Natural killer cell (primary cell): ENCODE measurements at regions of chr9 and their contacts with region 1.

Region 1: DNA sequence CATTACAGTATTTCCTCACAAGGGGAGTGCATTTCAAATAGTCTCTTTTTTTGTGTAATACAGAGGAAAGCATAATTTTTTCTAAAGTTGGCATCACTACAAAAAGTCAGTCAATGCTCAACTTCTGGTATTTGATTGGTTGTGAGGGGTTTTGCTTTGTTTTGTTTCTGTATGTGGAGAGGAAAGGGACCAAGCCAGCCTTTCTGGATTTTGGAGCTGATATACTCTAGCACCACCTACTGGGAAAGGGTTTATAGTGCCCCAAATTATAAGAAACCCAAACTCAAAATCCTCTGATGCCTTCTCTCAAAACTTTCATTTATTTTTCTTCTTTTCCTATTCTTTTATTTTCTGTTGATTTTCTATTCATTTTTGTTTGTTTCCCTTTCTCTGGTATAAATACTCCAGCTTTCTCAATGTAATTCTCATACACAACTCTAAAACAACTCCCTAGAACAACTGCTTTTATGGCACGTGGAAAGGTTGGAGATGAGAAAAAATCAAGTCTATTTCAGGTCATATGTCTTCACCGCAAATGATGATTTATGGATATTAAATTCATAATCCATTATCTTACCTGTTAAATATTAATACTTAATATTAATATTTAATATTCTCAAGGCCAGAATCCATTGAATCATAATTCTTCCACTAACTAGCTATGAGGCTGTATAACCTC is 69.5 kb upstream of the ANXA1 start:
- DNase-seq: peak in 1 of 2 donors; percentile 52
- ATAC-seq: peak; percentile 40 to 74 (median 64)
- H3K4me3 ChIP-seq: no peak overlapping the region
- H3K4me3 Mint-ChIP-seq: no peak overlapping the region
- H3K27ac ChIP-seq: no peak overlapping the region
- H3K27ac Mint-ChIP-seq: no peak overlapping the region
- H3K4me1 ChIP-seq: no peaks in the 10 kb centered on the region
- H3K4me1 Mint-ChIP-seq: no peaks in the 10 kb centered on the region
- H3K27me3 ChIP-seq: no peaks in the 10 kb centered on the region
- H3K27me3 Mint-ChIP-seq: peaks cover 6 to 48% of the 10 kb centered on the region in 2 donors
- CTCF ChIP-seq: peak; percentile 79

Region 2: DNA sequence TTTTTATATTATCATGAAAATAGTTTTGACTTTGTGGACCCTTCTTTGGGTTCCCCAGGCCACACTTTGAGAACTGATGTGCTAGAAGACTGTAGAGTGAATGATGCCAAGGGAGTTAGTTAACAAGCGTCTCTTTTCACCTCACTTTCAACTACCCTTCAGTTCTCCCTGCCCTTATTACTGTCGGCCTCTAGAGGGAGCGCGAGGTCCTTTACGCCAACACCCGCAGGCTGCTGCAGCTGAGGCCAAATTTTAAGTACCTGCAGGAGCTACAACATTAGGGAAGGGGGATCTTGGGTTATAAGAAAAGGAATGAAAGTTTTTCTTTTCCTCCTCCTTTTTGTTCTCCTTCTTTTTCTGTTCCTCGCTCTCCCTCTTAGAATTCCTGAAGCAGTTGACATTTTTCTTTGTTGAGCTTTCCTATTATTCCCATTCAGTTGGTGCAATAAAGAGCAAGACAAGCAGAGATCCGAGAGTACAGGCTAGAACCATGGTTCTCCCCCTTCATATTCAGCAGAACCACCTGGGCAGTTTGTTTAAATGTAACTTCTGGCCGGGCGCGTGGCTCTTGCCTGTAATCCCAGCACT is 801.1 kb before region 1 on chr9:
- intact Hi-C with region 1: loop called (anchors 2 kb)
- DNase-seq: peak; percentile 66 to 87
- ATAC-seq: peak; percentile 87 to 99 (median 99)
- H3K4me3 ChIP-seq: no peak overlapping the region
- H3K4me3 Mint-ChIP-seq: no peak overlapping the region
- H3K27ac ChIP-seq: no peak overlapping the region
- H3K27ac Mint-ChIP-seq: no peak overlapping the region
- H3K4me1 ChIP-seq: no peaks in the 10 kb centered on the region
- H3K4me1 Mint-ChIP-seq: no peaks in the 10 kb centered on the region
- H3K27me3 ChIP-seq: no peaks in the 10 kb centered on the region
- H3K27me3 Mint-ChIP-seq: peaks cover 0 to 2% of the 10 kb centered on the region in 2 donors
- CTCF ChIP-seq: peak; percentile 98

Region 3: DNA sequence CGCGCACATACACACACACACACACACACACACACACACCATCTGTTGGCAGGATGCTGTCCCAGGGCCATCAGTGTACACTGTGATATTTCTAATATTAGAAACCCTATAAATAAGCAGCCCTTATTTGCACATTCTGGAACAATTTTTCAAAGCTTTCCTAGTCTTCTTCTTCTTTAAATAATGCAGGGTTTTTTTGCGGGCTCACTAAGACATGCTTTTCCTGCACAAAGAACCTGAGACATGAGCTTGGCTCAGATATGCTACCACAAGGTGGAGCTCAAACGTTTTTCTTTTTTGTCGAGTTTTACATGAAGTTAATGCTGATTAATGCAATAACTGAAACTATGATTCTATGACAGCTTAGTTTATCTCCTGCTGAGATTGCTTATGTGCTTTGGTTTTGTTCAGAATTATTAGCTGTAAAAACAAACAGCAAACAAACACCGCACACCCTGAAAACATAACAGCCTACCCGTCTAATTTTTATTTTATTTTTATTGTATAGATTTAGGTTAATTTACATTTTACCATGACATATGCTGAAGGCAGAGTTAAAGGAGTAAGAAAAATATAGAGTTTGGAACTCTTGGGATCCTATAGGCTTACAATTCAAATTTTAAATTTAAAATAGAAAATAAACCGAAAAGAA is 225.0 kb before region 1 on chr9:
- intact Hi-C with region 1: loop called (anchors 1 kb)
- DNase-seq: peak in 1 of 2 donors; percentile 29
- ATAC-seq: no peak
- H3K4me3 ChIP-seq: no peak overlapping the region
- H3K4me3 Mint-ChIP-seq: no peak overlapping the region
- H3K27ac ChIP-seq: no peak overlapping the region
- H3K27ac Mint-ChIP-seq: no peak overlapping the region
- H3K4me1 ChIP-seq: no peaks in the 10 kb centered on the region
- H3K4me1 Mint-ChIP-seq: no peaks in the 10 kb centered on the region
- H3K27me3 ChIP-seq: no peaks in the 10 kb centered on the region
- H3K27me3 Mint-ChIP-seq: no peaks in the 10 kb centered on the region
- CTCF ChIP-seq: peak; percentile 12

Region 4: DNA sequence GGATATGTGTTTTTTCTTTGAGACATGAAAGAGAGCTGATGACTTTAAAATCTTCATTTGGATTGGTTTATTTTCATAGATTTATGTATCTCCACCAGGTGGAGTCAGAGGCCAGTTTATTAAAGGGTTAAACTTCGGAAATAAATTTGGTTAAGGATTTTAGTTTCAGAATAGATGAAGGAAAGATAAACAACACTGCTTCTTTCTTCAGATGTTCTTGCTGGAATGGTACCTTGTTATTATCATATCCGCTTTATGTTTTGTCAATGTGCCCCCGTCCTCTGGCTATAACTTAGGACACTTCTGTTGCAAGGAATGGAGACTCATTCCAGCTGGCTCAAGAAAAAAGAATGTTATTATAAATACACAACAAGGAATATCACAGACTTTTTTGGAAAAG is 210.4 kb before region 1 on chr9:
- intact Hi-C with region 1: loop called (anchors 5 kb)
- DNase-seq: no peak
- ATAC-seq: no peak
- H3K4me3 ChIP-seq: no peak overlapping the region
- H3K4me3 Mint-ChIP-seq: no peak overlapping the region
- H3K27ac ChIP-seq: no peak overlapping the region
- H3K27ac Mint-ChIP-seq: no peak overlapping the region
- H3K4me1 ChIP-seq: no peaks in the 10 kb centered on the region
- H3K4me1 Mint-ChIP-seq: peaks cover 0 to under 1% of the 10 kb centered on the region in 2 donors
- H3K27me3 ChIP-seq: no peaks in the 10 kb centered on the region
- H3K27me3 Mint-ChIP-seq: peaks cover 6 to 21% of the 10 kb centered on the region in 2 donors
- CTCF ChIP-seq: no peak